Cardiac septum (tissue), 1 donor: ENCODE measurements at regions of chr19 and their contacts with region 1.

Region 1: GRCh38 chr19:860481-861101 is 1.1 kb downstream of the CFD start:
- DNase-seq: no peak

Region 2: GRCh38 chr19:771332-771785 is 89.2 kb before region 1 on chr19:
- intact Hi-C with region 1: loop called (anchors 5 kb)
- DNase-seq: no peak

Region 3: GRCh38 chr19:801030-801860 is 59.3 kb before region 1 on chr19:
- intact Hi-C with region 1: no loop called
- DNase-seq: peak; percentile 92

Region 4: DNA sequence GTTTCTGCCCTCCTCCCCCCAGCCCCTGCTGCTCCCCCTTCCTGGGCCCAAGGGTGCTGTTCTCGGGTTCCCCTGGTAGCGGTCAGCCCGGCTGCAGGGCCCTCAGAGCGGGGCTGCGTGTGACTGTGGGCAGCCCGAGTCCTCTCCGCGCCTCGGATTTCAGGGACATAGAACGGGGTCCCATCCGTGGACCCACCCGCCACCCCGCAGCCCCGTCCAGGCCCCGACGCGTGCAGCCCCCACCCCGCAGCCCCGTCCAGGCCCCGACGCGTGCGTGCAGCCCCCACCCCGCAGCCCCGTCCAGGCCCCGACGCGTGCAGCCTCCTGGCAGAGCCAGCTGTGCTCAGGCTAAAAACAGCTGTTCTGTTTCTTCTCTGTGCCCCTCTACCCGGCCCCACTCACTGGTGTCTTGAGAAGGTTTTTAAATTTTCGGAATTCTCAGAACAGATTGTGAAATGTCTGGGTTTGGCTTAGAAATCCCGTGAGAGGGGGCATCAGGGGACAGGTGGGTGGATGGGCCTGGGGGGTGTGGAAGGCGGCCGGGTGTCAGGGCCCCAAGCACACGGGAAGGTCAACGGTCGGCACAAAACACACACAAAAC is 25.3 kb before region 1 on chr19:
- intact Hi-C with region 1: no loop called
- DNase-seq: no peak

Region 5: DNA sequence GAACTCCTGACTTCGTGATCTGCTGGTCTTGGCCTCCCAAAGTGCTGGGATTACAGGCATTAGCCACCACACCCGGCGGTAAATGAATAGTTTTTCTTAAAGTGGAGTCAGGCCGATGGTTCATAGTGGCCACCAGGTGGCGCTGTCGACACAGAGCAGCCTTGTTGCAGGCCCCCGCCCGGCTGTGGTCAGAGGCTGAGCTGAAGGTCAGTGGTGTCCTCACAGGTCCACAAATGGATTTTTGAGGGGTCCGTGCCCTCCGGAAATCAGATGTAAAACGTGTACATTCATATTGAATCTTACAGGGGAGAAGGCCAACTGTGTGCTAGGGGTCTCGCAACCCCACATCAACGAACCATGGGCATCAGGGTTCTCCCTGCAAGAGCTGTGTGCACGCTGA is 110.1 kb after region 1 on chr19:
- intact Hi-C with region 1: no loop called
- DNase-seq: no peak